ENCODE measurements at regions of chr1 and their contacts with region 1.

Region 1: GRCh38 chr1:6794164-6794563 is 8.9 kb downstream of the CAMTA1 start:
- DNase-seq: no peak
- H3K4me3 ChIP-seq: no peak overlapping the region
- H3K27ac ChIP-seq: no peak overlapping the region
- H3K4me1 ChIP-seq: peaks cover 5 to 82% (median 35%) of the 10 kb centered on the region in 4 donors
- H3K27me3 ChIP-seq: no peaks in the 10 kb centered on the region
- CTCF ChIP-seq: peak; percentile 41 to 57

Region 2: DNA sequence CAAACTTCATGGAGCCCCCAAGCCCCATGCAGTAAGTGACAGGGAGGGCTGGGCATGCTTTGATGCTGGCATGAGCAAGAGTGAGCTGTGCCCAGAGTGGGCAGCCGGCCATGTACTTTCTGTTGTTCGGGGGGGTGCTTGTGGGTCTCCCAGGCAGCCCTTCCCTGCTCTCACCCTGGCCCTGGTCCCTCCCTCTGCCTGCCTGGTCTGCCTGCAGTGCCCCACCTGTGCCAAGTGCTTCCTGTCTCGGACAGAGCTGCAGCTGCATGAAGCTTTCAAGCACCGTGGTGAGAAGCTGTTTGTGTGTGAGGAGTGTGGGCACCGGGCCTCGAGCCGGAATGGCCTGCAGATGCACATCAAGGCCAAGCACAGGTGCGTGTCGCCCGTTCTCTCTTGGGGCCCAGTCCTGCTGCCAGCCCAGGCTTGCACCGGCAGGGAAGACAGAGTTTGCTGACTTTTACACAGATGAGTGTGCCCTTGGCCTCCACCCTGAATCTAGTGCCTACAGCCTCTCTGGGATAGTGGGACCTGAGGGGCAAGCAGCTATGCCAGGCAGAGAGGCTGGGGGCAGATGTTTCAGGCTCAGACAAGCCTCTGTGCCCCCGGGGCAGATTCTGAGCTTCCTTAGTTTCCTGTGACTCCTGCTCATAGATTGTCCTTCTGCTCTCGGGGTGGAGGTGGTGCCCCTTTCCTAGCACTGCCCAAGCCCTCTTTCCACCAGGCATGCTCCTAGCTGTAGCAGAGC is 206.7 kb before region 1 on chr1:
- intact Hi-C with region 1: no loop called
- DNase-seq: peak; percentile 44 to 93
- H3K4me3 ChIP-seq: no peak overlapping the region
- H3K27ac ChIP-seq: peak overlapping the region; percentile 61 to 86
- H3K4me1 ChIP-seq: peaks cover 0 to 78% (median 67%) of the 10 kb centered on the region in 4 donors
- H3K27me3 ChIP-seq: no peaks in the 10 kb centered on the region
- CTCF ChIP-seq: no peak

Region 3: DNA sequence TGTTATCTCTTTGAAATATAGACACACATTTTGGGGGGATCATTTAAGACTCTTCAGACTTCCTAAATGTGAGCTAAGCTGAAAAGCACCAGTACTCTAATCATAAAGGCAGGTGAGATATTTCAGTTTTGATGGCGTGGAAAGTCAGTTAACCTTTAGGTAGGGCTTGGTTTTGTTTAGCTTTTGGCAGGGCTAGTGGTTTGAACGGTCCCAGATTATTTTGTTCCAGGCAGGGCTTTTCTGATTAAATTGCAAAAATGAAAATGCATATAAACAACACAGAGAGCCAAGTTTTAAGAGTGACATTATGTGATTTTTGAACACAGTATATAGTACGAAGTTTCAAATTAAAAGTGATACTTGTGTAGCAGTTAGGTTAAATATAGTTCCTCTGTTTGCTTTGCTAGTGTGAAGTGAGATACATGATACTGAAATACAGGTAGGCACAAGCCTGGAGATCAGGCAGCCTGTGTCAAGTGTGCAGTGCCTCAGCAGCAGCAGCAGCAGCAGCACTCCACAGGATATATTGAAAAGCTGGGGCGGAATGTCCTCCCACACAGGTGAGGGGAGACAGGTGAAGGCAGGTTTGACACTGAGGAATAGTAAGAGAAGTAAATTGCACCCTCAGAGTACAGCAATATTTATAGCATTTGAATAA is 38.5 kb after region 1 on chr1:
- intact Hi-C with region 1: no loop called
- DNase-seq: no peak
- H3K4me3 ChIP-seq: no peak overlapping the region
- H3K27ac ChIP-seq: peak overlapping the region; percentile 62 to 64
- H3K4me1 ChIP-seq: peaks cover 0 to 64% (median 29%) of the 10 kb centered on the region in 4 donors
- H3K27me3 ChIP-seq: no peaks in the 10 kb centered on the region
- CTCF ChIP-seq: no peak

Region 4: GRCh38 chr1:6889875-6890480 is 95.8 kb after region 1 on chr1:
- intact Hi-C with region 1: loop called (anchors 5 kb)
- DNase-seq: peak in 1 of 2 donors; percentile 48
- H3K4me3 ChIP-seq: no peak overlapping the region
- H3K27ac ChIP-seq: no peak overlapping the region
- H3K4me1 ChIP-seq: peaks cover 0 to 11% (median 0%) of the 10 kb centered on the region in 4 donors
- H3K27me3 ChIP-seq: no peaks in the 10 kb centered on the region
- CTCF ChIP-seq: peak; percentile 76 to 80

Region 5: GRCh38 chr1:7070389-7071029 is 276.3 kb after region 1 on chr1:
- intact Hi-C with region 1: loop called (anchors 5 kb)
- DNase-seq: peak; percentile 58 to 76
- H3K4me3 ChIP-seq: peak overlapping the region; percentile 35 to 48
- H3K27ac ChIP-seq: no peak overlapping the region
- H3K4me1 ChIP-seq: peaks cover 0 to 9% (median 3%) of the 10 kb centered on the region in 4 donors
- H3K27me3 ChIP-seq: peaks cover 0 to 9% of the 10 kb centered on the region in 2 donors
- CTCF ChIP-seq: peak; percentile 69 to 79